ENCODE measurements at regions of chr2 and their contacts with region 1.

Region 1: DNA sequence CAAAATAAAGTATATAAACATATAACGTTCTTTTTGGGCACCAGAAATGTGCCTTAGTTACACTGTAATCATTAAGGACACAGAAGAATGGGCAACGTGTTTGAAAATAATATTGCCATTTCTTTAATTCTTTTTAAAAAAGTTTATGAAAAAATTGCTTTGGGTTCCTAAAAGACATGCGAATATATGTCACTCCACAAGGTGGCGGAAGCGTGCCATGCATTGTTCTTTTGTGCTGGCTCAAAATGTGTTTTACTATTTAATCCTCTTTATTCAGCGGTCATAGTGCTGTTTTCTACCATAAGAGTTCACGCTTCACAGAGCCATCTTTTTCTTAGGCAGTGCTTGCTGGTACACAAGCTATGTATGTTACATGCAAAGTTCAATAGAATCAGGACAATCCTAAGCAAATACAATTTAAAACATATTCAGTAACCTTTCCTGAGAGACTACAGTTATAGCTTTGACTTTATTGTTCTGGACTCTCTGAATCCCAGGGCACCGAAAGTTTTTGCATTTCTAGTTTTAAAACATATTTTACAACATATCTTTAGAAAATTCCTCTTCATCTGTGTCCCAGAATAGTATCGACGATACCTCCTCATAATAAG is 147.8 kb upstream of the ERBB4 start:
- DNase-seq: peak; percentile 80
- H3K4me3 Mint-ChIP-seq: no peak overlapping the region
- H3K27ac Mint-ChIP-seq: no peak overlapping the region
- H3K4me1 Mint-ChIP-seq: peaks cover 1% of the 10 kb centered on the region
- H3K27me3 Mint-ChIP-seq: no peaks in the 10 kb centered on the region

Region 2: DNA sequence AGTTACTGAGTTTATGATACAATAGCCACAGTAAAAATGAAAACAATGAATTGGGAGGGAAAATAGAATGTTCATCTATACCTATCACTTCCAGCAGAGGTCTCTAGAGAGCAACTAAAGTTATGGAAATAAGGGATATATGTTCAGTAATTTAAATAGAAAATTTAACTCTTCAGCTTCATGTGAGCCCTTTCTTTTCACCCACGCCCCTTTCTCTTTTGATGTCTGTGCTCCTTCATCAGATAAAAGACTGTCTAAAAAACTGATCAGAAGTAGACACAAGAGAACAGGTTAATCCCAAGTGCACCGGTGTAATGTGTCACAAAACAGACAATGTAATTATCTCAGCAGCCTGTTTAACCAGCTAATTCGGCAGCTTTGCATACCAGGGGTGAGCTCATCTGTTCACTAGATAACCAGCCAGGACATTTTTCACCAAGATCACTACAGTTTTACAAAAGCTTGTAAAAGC is 90.7 kb after region 1 on chr2:
- intact Hi-C with region 1: loop called (anchors 10 kb)
- DNase-seq: peak; percentile 54
- H3K4me3 Mint-ChIP-seq: no peak overlapping the region
- H3K27ac Mint-ChIP-seq: no peak overlapping the region
- H3K4me1 Mint-ChIP-seq: peaks cover 2% of the 10 kb centered on the region
- H3K27me3 Mint-ChIP-seq: no peaks in the 10 kb centered on the region

Region 3: GRCh38 chr2:212863185-212863588 is 176.8 kb after region 1 on chr2:
- intact Hi-C with region 1: loop called (anchors 5 kb)
- DNase-seq: peak; percentile 60
- H3K4me3 Mint-ChIP-seq: no peak overlapping the region
- H3K27ac Mint-ChIP-seq: no peak overlapping the region
- H3K4me1 Mint-ChIP-seq: no peaks in the 10 kb centered on the region
- H3K27me3 Mint-ChIP-seq: no peaks in the 10 kb centered on the region

Measured in activated CD4-positive, alpha-beta T cell treated with anti-CD3 and anti-CD28 coated beads, Interleukin-2, amount 10 ng/mL, durations not matched to agents 24 days and 14 days (primary cell).